ENCODE measurements at regions of chrX and their contacts with region 1.

Region 1: DNA sequence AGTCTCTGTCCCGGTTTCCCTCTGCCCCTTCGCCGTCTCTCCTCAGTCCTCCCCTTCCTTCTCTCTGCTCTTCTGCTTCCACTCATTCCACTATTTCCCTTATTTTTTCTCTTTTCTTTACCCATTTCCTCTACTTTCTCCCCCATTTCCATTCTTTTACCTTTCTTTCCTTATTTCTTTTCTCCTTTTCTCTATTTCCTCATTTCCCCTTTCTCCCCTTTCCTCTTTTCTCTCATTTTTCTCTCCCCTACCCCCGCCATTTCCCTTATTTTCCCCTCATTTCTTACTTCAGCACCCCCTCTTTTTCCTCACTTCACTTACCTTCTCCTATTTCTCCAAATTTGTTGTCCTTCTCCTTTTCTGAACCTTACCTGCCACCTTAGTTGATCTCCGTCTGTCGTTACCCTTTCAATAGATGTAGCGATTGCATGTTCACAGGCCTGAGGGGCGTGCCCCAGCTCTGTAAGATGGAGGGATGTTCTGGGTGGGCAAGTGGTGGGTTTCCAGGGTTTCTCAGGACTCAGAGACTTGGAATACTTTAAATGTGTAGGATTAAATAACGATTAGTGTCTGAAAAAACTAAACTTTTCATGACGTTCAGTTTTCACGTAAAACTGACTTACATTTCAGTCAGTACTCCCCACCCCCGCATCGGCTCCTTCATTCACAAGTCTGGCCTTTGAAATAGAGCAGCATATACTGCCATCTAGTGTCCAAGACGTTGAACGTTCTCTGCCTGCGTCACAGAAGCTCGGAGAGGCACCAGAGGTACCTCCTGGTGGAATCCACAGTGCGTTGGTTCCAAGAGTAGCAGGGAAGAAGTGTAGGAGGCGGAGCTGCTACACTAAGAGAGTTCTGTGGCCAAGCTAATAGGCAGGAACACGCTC is 641 bp upstream of the NCBP2L start:
- DNase-seq: peak; percentile 86
- H3K4me3 ChIP-seq: peak overlapping the region; percentile 38 to 47
- H3K27ac ChIP-seq: peak overlapping the region; percentile 88 to 90
- H3K4me1 ChIP-seq: no peaks in the 10 kb centered on the region
- H3K27me3 ChIP-seq: no peaks in the 10 kb centered on the region
- CTCF ChIP-seq: peak; percentile 51 to 91 (median 76)
- POLR2A ChIP-seq: no peak

Region 2: GRCh38 chrX:106999002-106999975 is 777.6 kb before region 1 on chrX:
- intact Hi-C with region 1: loop called (anchors 10 kb)
- DNase-seq: peak; percentile 48
- H3K4me3 ChIP-seq: peak overlapping the region; percentile 47 to 50
- H3K27ac ChIP-seq: peak overlapping the region; percentile 63 to 70
- H3K4me1 ChIP-seq: no peaks in the 10 kb centered on the region
- H3K27me3 ChIP-seq: no peaks in the 10 kb centered on the region
- CTCF ChIP-seq: peak in 3 of 4 experiments; percentile 28 to 43 (median 41)
- POLR2A ChIP-seq: no peak

Region 3: DNA sequence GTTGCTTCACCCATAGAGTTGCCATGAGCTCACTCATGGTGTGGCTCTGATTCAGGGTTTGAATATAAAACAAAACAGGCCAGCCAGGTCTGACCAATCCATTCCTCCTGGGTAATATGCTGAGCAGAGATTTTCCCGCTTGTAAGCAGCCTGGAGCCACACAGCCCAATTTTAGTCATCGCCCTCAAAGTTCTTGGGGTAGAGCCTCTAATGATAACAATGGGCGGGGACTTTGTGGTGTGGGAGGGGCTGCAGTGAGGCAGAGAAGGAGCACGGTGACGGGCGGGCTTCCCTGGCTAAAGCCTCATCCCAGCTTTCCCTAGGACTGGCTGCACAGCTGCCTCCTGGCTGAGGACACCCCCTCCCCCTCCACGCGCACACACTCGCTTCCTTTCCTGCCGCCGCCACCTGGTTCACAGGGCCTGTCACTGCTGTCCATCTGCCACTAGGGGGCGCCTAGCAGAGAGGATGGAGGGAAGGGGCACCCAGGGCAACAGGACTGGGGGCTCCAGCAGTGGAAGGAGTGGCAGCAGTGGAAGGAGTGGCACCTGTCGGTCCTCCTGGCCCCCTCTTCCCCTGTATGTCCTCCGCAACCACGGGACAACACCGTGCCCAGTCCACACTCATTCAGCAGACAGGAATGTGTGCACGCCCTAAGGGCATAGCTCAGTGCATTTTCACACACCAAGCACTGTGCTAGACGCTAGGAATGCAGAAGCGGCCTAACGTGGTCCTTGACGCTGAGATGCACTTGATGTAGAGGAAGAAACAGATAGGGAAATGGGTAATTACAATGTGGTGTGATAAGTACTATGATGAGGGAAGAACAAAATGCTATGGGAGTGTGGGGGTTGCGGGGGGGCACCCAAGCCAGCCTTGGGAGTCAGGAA is 121.8 kb before region 1 on chrX:
- intact Hi-C with region 1: loop called (anchors 5 kb)
- DNase-seq: no peak
- H3K4me3 ChIP-seq: no peak overlapping the region
- H3K27ac ChIP-seq: no peak overlapping the region
- H3K4me1 ChIP-seq: no peaks in the 10 kb centered on the region
- H3K27me3 ChIP-seq: no peaks in the 10 kb centered on the region
- CTCF ChIP-seq: peak in 3 of 4 experiments; percentile 16 to 46 (median 33)
- POLR2A ChIP-seq: no peak

Region 4: GRCh38 chrX:107672955-107673378 is 103.9 kb before region 1 on chrX:
- intact Hi-C with region 1: loop called (anchors 5 kb)
- DNase-seq: peak; percentile 58
- H3K4me3 ChIP-seq: no peak overlapping the region
- H3K27ac ChIP-seq: peak overlapping the region; percentile 89
- H3K4me1 ChIP-seq: no peaks in the 10 kb centered on the region
- H3K27me3 ChIP-seq: no peaks in the 10 kb centered on the region
- CTCF ChIP-seq: peak; percentile 44 to 85 (median 70)
- POLR2A ChIP-seq: no peak

Region 5: DNA sequence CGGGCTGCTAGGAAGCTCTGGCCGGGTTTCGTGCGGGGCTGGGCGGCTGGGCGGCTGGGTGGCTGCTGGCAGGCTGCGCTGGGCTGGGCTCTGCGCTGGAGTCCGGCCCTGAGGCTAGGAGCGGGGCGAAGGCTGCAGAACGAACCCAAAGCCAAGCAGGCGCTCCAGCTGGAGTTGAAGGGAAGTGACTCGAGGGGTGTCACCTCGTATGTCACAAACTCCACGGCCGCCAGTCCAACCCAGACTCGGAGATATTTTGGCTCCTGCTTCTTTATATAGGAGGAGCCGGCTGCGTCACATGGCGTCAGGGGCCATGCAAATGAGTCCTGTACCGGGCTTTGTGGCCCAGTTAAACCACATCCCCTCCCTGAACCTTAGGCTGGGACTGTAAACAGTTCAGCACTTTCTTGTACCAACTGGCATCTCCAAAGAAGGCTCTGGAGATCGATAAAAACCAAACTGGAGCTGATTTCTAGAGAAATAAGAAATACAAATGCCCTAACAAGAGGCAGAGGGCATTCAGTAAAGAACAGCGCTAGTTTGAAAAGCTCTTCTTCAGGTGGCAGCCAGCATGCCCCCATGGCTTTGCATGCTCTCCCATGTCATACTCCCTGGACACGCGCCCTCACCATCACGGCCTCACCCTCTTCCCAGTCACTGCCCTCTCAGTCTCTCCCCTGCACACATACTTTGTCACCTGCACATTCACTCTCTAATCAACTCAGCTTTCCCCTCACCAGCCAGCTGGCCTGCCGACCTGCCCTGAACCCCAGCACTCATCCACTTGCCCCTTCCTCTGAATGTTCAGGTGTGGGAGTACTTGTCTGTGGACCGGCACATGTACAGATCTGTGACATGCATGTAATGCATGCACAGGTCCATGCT is 59.8 kb before region 1 on chrX:
- intact Hi-C with region 1: loop called (anchors 2 kb)
- DNase-seq: peak; percentile 87
- H3K4me3 ChIP-seq: peak overlapping the region; percentile 64 to 71
- H3K27ac ChIP-seq: peak overlapping the region; percentile 98
- H3K4me1 ChIP-seq: no peaks in the 10 kb centered on the region
- H3K27me3 ChIP-seq: no peaks in the 10 kb centered on the region
- CTCF ChIP-seq: peak in 1 of 4 experiments; percentile 18
- POLR2A ChIP-seq: peak; percentile 94

Measured in prostate gland (tissue), 2 donors.